ENCODE measurements at regions of chr5 and their contacts with region 1.

Region 1: GRCh38 chr5:174793684-174794328 is 69.4 kb downstream of the MSX2 start:
- DNase-seq: peak; percentile 76
- ATAC-seq: peak; percentile 80

Region 2: DNA sequence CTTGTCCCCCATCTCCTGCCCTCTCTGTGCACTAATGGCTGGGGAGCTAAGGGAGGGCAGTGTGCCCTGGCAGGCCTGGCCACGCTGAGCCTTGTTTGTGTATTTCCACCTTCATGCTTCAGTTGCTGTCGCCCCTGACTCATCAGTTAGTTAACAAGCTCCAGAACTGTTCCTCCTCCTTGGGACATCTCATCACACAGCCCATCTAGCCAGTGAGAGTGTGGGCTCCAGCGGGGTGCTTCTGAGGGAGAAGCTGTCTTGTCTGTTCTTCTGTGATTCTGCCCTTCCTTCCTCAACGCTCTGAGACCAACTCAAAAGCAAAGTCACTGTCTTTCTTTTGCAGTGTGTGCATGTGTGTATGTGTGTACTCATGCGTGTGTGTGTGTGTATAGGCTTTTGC is 964.0 kb before region 1 on chr5:
- intact Hi-C with region 1: no loop called
- DNase-seq: no peak
- ATAC-seq: no peak

Region 3: DNA sequence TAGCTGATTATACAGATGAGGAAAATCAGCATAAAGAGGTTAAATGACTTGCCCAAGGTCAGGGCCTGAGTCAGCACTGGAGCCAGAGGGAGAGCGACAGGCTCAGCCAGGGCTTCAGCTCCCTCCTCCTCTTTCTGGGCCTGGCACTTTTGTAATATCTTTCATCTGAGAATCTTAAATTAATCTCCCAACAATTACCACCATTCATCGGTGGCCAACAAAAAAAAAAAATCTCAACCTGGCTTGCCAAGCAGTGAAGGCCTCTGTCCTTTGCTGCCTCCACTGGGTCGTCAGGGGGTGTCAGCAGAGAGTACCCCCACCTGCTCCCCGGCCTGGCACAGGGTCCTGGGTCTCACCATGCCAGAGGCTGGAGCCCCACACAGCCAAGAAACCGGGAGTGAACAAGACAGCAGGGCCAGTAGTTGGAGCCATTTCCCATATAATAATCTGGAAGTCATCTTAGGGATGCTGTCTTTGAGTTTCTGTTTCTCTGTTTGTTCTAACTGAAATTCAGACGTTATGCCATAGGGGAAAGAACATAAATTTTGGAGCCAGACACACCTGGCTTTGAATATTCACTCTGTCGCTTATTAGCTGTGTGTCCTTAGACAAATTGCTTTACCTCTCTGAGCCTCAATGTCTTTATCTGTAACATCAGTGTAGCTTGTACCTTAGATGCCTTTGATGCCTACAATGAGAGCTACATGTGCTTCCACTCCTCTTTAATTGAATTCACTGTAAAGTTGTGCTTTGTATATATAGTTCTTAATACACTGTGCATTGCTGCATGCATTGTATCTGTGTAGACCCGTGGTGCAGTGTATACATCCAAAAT is 369.4 kb before region 1 on chr5:
- intact Hi-C with region 1: loop called (anchors 5 kb)
- DNase-seq: no peak
- ATAC-seq: no peak